Panc1 (cell line): ENCODE measurements at regions of chr20 and their contacts with region 1.

Region 1: DNA sequence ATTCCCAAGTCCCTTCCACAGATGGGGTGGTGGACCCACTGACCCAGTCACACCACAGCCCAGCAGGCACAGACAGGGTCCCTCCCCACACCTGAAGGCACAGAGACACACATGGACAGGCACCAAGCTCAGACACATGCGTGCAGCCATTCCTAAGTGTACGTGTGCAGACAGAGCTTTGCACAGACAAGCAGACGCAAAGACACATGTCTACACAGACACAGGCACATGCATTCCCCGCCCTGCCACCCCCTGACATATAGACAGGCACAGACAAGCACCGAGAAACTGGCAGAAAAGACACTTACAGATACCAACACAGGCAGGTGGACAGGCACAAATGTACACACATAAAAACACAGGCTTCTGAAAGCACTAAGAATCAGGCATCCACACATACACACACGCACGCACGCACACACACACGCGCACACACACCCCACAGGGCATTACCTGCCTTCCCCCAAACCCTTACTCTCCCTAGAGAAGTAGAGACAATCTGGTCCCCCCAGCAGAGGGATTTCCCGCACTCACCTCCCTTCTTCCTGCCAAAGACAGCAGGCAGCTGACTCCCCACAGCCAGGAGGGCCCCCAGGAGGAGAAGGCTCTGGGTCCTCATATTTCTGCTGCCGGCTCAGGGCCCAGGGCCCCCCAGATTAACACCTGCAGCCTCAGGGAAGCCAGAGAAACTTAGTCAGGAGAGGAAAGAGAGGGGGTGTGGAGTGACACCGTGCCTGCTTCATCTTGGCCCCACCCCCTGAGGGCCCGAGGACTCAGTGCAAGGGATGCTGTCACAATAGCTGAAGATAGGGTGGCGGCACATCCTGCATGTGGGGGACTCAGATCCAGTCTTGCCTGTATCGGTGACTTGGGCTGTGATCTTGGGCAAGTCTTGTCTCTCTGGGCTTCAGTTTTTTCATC is at the start of gene WFDC5:
- DNase-seq: no peak
- ATAC-seq: no peak
- H3K4me3 ChIP-seq: no peak within 1 kb of the TSS
- H3K27ac ChIP-seq: no peak within 1 kb of the TSS
- H3K4me1 ChIP-seq: no peaks in the 10 kb centered on the region
- H3K27me3 ChIP-seq: peaks cover 4% of the 10 kb centered on the region; the same call in 1 of the 2 replicates
- CTCF ChIP-seq: no peak
- total RNA-seq, gene WFDC5: not detected

Region 2: GRCh38 chr20:44896583-44896982 is 218.1 kb before region 1 on chr20:
- CTCF ChIA-PET with region 1: no interaction called
- POLR2A ChIA-PET with region 1: no interaction called
- in situ Hi-C with region 1: no loop called
- intact Hi-C with region 1: no loop called
- DNase-seq: no peak
- ATAC-seq: no peak
- H3K4me3 ChIP-seq: no peak overlapping the region
- H3K27ac ChIP-seq: no peak overlapping the region
- H3K4me1 ChIP-seq: peaks cover 6% of the 10 kb centered on the region; the same call in 1 of the 2 replicates
- H3K27me3 ChIP-seq: no peaks in the 10 kb centered on the region
- CTCF ChIP-seq: no peak

Region 3: GRCh38 chr20:45211569-45212474 is 97.1 kb after region 1 on chr20:
- CTCF ChIA-PET with region 1: interaction called, 3 read pairs
- POLR2A ChIA-PET with region 1: interaction called, 15 read pairs
- in situ Hi-C with region 1: no loop called
- intact Hi-C with region 1: no loop called
- DNase-seq: no peak
- ATAC-seq: no peak
- H3K4me3 ChIP-seq: no peak overlapping the region
- H3K27ac ChIP-seq: no peak overlapping the region
- H3K4me1 ChIP-seq: no peaks in the 10 kb centered on the region
- H3K27me3 ChIP-seq: peaks cover 7% of the 10 kb centered on the region
- CTCF ChIP-seq: no peak